ENCODE measurements at regions of chr17 and their contacts with region 1.

Region 1: GRCh38 chr17:43125133-43125966 is at the start of gene BRCA1:
- DNase-seq: peak; percentile 91
- ATAC-seq: peak; percentile 96
- H3K4me3 ChIP-seq: peak within 1 kb of the TSS; percentile 83 to 91
- H3K27ac ChIP-seq: peak within 1 kb of the TSS; percentile 97
- H3K4me1 ChIP-seq: peaks cover 6% of the 10 kb centered on the region; the same call in 1 of the 2 replicates
- H3K27me3 ChIP-seq: no peaks in the 10 kb centered on the region
- CTCF ChIP-seq: no peak
- total RNA-seq, gene BRCA1: 29.9 TPM

Region 2: GRCh38 chr17:43042025-43042628 is 83.2 kb before region 1 on chr17:
- CTCF ChIA-PET with region 1: no interaction called
- POLR2A ChIA-PET with region 1: no interaction called
- in situ Hi-C with region 1: no loop called
- intact Hi-C with region 1: no loop called
- DNase-seq: no peak
- ATAC-seq: no peak
- H3K4me3 ChIP-seq: no peak overlapping the region
- H3K27ac ChIP-seq: no peak overlapping the region
- H3K4me1 ChIP-seq: no peaks in the 10 kb centered on the region
- H3K27me3 ChIP-seq: no peaks in the 10 kb centered on the region
- CTCF ChIP-seq: no peak

Region 3: GRCh38 chr17:43309505-43310332 is 184.4 kb after region 1 on chr17:
- CTCF ChIA-PET with region 1: no interaction called
- POLR2A ChIA-PET with region 1: interaction called, 11 read pairs
- in situ Hi-C with region 1: no loop called
- intact Hi-C with region 1: no loop called
- DNase-seq: no peak
- ATAC-seq: no peak
- H3K4me3 ChIP-seq: no peak overlapping the region
- H3K27ac ChIP-seq: no peak overlapping the region
- H3K4me1 ChIP-seq: no peaks in the 10 kb centered on the region
- H3K27me3 ChIP-seq: no peaks in the 10 kb centered on the region
- CTCF ChIP-seq: no peak